Activated T-helper 1 cell treated with anti-CD3 and anti-CD28 coated beads, Interleukin-12 subunit alpha, Interleukin-12 subunit beta, Interleukin-2, Interleukin-4 antibody, amounts not matched to agents 30 ng/mL and 10 ng/mL and 1 ng/mL, durations not matched to agents 14 hours and 24 hours and 36 hours (primary cell): ENCODE measurements at regions of chr2 and their contacts with region 1.

Region 1: DNA sequence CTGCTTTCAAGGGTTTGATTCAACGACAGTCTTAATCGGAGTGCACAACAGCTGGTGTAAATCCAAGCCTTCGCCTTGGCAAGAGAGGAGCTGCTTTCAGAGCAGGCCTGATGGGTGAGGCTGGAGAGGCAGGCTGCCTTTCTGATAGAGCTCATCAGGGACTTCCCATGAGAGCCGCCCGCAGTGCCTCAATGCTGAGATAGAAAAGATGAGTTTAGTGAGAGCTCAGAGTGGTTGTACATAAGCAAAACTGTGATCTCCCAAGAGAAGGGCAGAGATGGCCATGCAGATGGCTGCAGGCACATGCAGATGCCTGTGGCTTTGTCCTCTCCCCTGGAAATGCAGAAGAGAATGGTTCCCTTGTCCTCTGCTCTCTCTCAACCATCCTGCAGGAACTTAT is 122.1 kb downstream of the ARL4C start:
- DNase-seq: no peak
- H3K4me3 Mint-ChIP-seq: no peak overlapping the region
- H3K27ac Mint-ChIP-seq: no peak overlapping the region
- H3K4me1 Mint-ChIP-seq: peaks cover 59% of the 10 kb centered on the region
- H3K27me3 Mint-ChIP-seq: no peaks in the 10 kb centered on the region

Region 2: DNA sequence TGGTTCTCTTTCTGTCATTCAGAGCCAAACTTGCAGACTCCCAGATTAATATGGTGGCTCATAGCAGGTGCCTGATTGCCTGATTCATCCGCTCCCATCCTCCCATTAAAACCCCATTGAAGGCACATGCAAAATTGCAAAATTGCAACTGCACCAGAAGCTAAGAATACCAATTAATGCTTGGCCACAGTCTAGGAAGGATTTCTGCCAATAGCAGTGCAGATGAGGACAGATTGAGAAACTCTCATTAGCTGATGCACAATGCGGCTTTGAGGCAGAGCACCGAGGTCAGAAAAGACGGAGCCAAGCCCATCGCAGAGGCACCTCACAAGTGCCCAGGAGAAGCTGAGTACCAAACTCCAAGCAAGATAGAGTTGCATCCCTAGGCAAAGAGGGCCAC is 50.6 kb before region 1 on chr2:
- intact Hi-C with region 1: loop called (anchors 5 kb)
- DNase-seq: no peak
- H3K4me3 Mint-ChIP-seq: no peak overlapping the region
- H3K27ac Mint-ChIP-seq: peak overlapping the region; percentile 93
- H3K4me1 Mint-ChIP-seq: peaks cover 52% of the 10 kb centered on the region
- H3K27me3 Mint-ChIP-seq: no peaks in the 10 kb centered on the region